CD4-positive, alpha-beta memory T cell (primary cell): ENCODE measurements at regions of chr10 and their contacts with region 1.

Region 1: GRCh38 chr10:110864662-110865140 is 7.0 kb upstream of the PDCD4 start:
- DNase-seq: peak; percentile 85 to 91 (median 87)
- H3K4me3 ChIP-seq: peak overlapping the region in 1 of 2 donors; percentile 31
- H3K4me3 Mint-ChIP-seq: peak overlapping the region; percentile 81 to 93 (median 86)
- H3K27ac ChIP-seq: peak overlapping the region; percentile 98
- H3K27ac Mint-ChIP-seq: peak overlapping the region; percentile 91 to 100 (median 99)
- H3K4me1 ChIP-seq: peaks cover 99% of the 10 kb centered on the region
- H3K4me1 Mint-ChIP-seq: peaks cover 78 to 100% (median 93%) of the 10 kb centered on the region in 4 donors
- H3K27me3 ChIP-seq: no peaks in the 10 kb centered on the region
- H3K27me3 Mint-ChIP-seq: no peaks in the 10 kb centered on the region

Region 2: GRCh38 chr10:110296966-110297365 is 567.7 kb before region 1 on chr10:
- CTCF ChIA-PET with region 1: no interaction called
- POLR2A ChIA-PET with region 1: no interaction called
- intact Hi-C with region 1: no loop called
- DNase-seq: no peak
- H3K4me3 ChIP-seq: no peak overlapping the region
- H3K4me3 Mint-ChIP-seq: no peak overlapping the region
- H3K27ac ChIP-seq: no peak overlapping the region
- H3K27ac Mint-ChIP-seq: peak overlapping the region in 2 of 7 donors; percentile 0 to 30
- H3K4me1 ChIP-seq: peaks cover 34% of the 10 kb centered on the region
- H3K4me1 Mint-ChIP-seq: peaks cover 25 to 38% (median 34%) of the 10 kb centered on the region in 4 donors
- H3K27me3 ChIP-seq: no peaks in the 10 kb centered on the region
- H3K27me3 Mint-ChIP-seq: no peaks in the 10 kb centered on the region

Region 3: DNA sequence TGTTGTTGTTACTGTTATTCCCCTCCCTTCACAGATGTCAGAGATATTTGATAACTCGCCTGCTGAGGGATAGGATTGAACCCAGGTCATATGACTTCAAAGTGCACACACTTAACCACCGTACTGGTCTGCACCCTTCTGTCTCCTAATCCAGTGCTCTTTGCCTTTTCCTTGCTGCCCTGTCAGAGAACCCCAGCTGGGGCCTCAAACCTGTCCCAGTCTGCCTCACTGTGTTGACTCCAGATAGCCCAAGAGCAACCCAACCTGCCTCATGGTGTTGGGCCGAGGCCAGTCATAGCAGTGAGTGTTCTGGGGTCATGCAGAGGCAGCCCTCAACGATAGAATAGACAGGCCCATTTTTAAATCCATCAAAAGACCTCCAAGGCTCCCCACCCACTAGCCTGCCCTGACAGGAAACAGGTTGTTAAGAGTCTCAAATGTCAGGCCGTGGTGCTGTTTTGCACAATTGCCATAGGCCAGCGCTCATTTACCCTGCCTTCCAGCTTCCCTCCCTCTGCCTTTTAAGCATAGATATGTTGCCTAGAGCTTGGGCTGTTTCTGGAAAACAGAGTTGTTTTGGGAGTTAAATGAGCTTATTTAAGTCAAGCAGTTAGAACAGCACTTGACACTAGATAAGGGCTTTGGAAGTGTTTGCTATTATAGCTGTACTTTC is 29.9 kb before region 1 on chr10:
- CTCF ChIA-PET with region 1: interaction called, 13 read pairs
- POLR2A ChIA-PET with region 1: interaction called, 14 read pairs
- intact Hi-C with region 1: no loop called
- DNase-seq: peak in 2 of 5 donors; percentile 19 to 24
- H3K4me3 ChIP-seq: no peak overlapping the region
- H3K4me3 Mint-ChIP-seq: peak overlapping the region in 3 of 8 donors; percentile 0 to 26 (median 17)
- H3K27ac ChIP-seq: no peak overlapping the region
- H3K27ac Mint-ChIP-seq: peak overlapping the region in 6 of 7 donors; percentile 44 to 82 (median 62)
- H3K4me1 ChIP-seq: peaks cover 26% of the 10 kb centered on the region
- H3K4me1 Mint-ChIP-seq: peaks cover 5 to 29% (median 15%) of the 10 kb centered on the region in 4 donors
- H3K27me3 ChIP-seq: no peaks in the 10 kb centered on the region
- H3K27me3 Mint-ChIP-seq: no peaks in the 10 kb centered on the region

Region 4: GRCh38 chr10:110843031-110843430 is 21.7 kb before region 1 on chr10:
- CTCF ChIA-PET with region 1: interaction called, 20 read pairs
- POLR2A ChIA-PET with region 1: interaction called, 45 read pairs
- intact Hi-C with region 1: no loop called
- DNase-seq: peak; percentile 44 to 78 (median 59)
- H3K4me3 ChIP-seq: no peak overlapping the region
- H3K4me3 Mint-ChIP-seq: peak overlapping the region; percentile 7 to 83 (median 34)
- H3K27ac ChIP-seq: peak overlapping the region; percentile 5
- H3K27ac Mint-ChIP-seq: peak overlapping the region; percentile 54 to 95 (median 85)
- H3K4me1 ChIP-seq: peaks cover 35% of the 10 kb centered on the region
- H3K4me1 Mint-ChIP-seq: peaks cover 28 to 62% (median 46%) of the 10 kb centered on the region in 4 donors
- H3K27me3 ChIP-seq: no peaks in the 10 kb centered on the region
- H3K27me3 Mint-ChIP-seq: no peaks in the 10 kb centered on the region

Region 5: GRCh38 chr10:110852255-110852896 is 12.3 kb before region 1 on chr10:
- CTCF ChIA-PET with region 1: interaction called, 22 read pairs
- POLR2A ChIA-PET with region 1: interaction called, 112 read pairs
- intact Hi-C with region 1: loop called (anchors 2 kb)
- DNase-seq: no peak
- H3K4me3 ChIP-seq: no peak overlapping the region
- H3K4me3 Mint-ChIP-seq: peak overlapping the region in 7 of 8 donors; percentile 23 to 86 (median 78)
- H3K27ac ChIP-seq: no peak overlapping the region
- H3K27ac Mint-ChIP-seq: peak overlapping the region; percentile 79 to 89 (median 86)
- H3K4me1 ChIP-seq: peaks cover 74% of the 10 kb centered on the region
- H3K4me1 Mint-ChIP-seq: peaks cover 61 to 82% (median 72%) of the 10 kb centered on the region in 4 donors
- H3K27me3 ChIP-seq: no peaks in the 10 kb centered on the region
- H3K27me3 Mint-ChIP-seq: no peaks in the 10 kb centered on the region

Region 6: GRCh38 chr10:110883924-110884323 is 19.2 kb after region 1 on chr10:
- CTCF ChIA-PET with region 1: interaction called, 31 read pairs
- POLR2A ChIA-PET with region 1: interaction called, 69 read pairs
- intact Hi-C with region 1: no loop called
- DNase-seq: no peak
- H3K4me3 ChIP-seq: no peak overlapping the region
- H3K4me3 Mint-ChIP-seq: peak overlapping the region; percentile 54 to 83 (median 80)
- H3K27ac ChIP-seq: no peak overlapping the region
- H3K27ac Mint-ChIP-seq: peak overlapping the region; percentile 65 to 94 (median 80)
- H3K4me1 ChIP-seq: peaks cover 81% of the 10 kb centered on the region
- H3K4me1 Mint-ChIP-seq: peaks cover 52 to 83% (median 68%) of the 10 kb centered on the region in 4 donors
- H3K27me3 ChIP-seq: no peaks in the 10 kb centered on the region
- H3K27me3 Mint-ChIP-seq: no peaks in the 10 kb centered on the region

Region 7: GRCh38 chr10:110931769-110932381 is 67.2 kb after region 1 on chr10:
- CTCF ChIA-PET with region 1: no interaction called
- POLR2A ChIA-PET with region 1: no interaction called
- intact Hi-C with region 1: no loop called
- DNase-seq: no peak
- H3K4me3 ChIP-seq: no peak overlapping the region
- H3K4me3 Mint-ChIP-seq: no peak overlapping the region
- H3K27ac ChIP-seq: no peak overlapping the region
- H3K27ac Mint-ChIP-seq: no peak overlapping the region
- H3K4me1 ChIP-seq: peaks cover 52% of the 10 kb centered on the region
- H3K4me1 Mint-ChIP-seq: peaks cover 13 to 26% (median 22%) of the 10 kb centered on the region in 4 donors
- H3K27me3 ChIP-seq: no peaks in the 10 kb centered on the region
- H3K27me3 Mint-ChIP-seq: no peaks in the 10 kb centered on the region